ENCODE measurements at regions of chr11 and their contacts with region 1.

Region 1: DNA sequence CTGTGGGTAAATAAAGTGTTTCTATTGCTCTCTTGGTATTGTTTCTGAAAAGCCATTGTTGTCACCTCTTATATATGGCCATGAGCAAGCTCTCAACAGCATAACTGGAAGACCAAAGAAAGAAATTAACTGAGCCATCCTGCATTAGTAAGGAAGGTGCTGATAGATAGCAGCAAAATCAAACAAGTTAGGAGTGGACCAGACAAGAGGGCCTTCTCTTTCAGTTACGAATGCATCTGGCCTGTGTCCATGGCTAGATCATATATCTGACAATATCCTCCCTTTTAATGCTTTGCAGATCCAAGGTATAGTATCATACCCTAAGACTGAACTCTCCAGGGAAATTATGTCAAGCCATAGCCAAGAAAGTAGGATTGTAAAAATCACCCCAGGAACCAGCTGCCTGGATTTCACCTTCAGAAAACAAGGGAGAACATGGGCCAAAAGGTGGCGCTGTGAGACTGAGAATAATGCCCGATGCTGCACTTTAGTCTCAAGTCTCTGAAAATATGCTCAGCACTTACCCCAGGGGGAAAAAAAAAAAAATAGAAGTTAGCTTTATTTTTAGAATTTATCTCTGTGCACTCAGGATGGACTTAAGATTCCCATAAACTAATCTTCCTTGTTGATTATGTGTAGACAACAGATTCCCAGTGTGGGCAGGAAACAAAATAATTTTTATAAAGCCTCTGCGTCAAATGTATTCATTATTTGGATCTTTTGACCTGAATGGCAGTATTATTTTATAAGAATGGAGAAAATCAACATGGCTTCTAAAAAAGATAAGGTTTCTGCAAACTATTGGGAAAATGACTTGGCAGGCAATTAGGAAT is 415.1 kb downstream of the ETS1 start:
- DNase-seq: peak; percentile 75 to 81 (median 77)
- H3K4me3 ChIP-seq: no peak overlapping the region
- H3K4me3 Mint-ChIP-seq: no peak overlapping the region
- H3K27ac ChIP-seq: no peak overlapping the region
- H3K27ac Mint-ChIP-seq: peak overlapping the region in 1 of 7 donors; percentile 11
- H3K4me1 ChIP-seq: no peaks in the 10 kb centered on the region
- H3K4me1 Mint-ChIP-seq: peaks cover 0 to 4% (median under 1%) of the 10 kb centered on the region in 4 donors
- H3K27me3 ChIP-seq: no peaks in the 10 kb centered on the region
- H3K27me3 Mint-ChIP-seq: no peaks in the 10 kb centered on the region

Region 2: DNA sequence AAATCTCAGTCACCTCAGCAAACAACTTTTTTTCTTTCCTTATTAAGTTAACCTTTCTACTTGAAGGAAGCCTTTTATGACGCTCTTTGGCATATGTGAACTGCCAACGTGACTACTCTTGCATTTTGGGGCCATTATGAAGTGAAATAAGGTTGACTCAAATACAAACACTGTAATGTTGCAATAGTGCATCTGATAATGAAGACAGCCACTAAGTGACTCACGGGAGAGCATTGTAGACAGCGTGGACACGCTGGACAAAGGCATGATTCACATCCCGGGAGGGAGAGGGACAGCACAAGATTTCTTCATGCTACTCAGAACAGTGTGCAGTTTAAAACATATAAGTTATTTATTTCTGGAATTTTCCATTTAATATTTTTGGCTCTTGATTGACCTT is 145.7 kb before region 1 on chr11:
- CTCF ChIA-PET with region 1: interaction called, 19 read pairs
- POLR2A ChIA-PET with region 1: no interaction called
- intact Hi-C with region 1: loop called (anchors 1 kb)
- DNase-seq: no peak
- H3K4me3 ChIP-seq: no peak overlapping the region
- H3K4me3 Mint-ChIP-seq: no peak overlapping the region
- H3K27ac ChIP-seq: no peak overlapping the region
- H3K27ac Mint-ChIP-seq: no peak overlapping the region
- H3K4me1 ChIP-seq: no peaks in the 10 kb centered on the region
- H3K4me1 Mint-ChIP-seq: peaks cover 0 to 4% (median 1%) of the 10 kb centered on the region in 4 donors
- H3K27me3 ChIP-seq: no peaks in the 10 kb centered on the region
- H3K27me3 Mint-ChIP-seq: peaks cover 3 to 4% of the 10 kb centered on the region in 2 donors

Region 3: GRCh38 chr11:128283451-128283850 is 111.2 kb after region 1 on chr11:
- CTCF ChIA-PET with region 1: interaction called, 22 read pairs
- POLR2A ChIA-PET with region 1: no interaction called
- intact Hi-C with region 1: no loop called
- DNase-seq: no peak
- H3K4me3 ChIP-seq: no peak overlapping the region
- H3K4me3 Mint-ChIP-seq: no peak overlapping the region
- H3K27ac ChIP-seq: no peak overlapping the region
- H3K27ac Mint-ChIP-seq: no peak overlapping the region
- H3K4me1 ChIP-seq: peaks cover 36% of the 10 kb centered on the region
- H3K4me1 Mint-ChIP-seq: peaks cover 32 to 41% (median 33%) of the 10 kb centered on the region in 4 donors
- H3K27me3 ChIP-seq: no peaks in the 10 kb centered on the region
- H3K27me3 Mint-ChIP-seq: peaks cover 4% of the 10 kb centered on the region in 2 donors

Region 4: DNA sequence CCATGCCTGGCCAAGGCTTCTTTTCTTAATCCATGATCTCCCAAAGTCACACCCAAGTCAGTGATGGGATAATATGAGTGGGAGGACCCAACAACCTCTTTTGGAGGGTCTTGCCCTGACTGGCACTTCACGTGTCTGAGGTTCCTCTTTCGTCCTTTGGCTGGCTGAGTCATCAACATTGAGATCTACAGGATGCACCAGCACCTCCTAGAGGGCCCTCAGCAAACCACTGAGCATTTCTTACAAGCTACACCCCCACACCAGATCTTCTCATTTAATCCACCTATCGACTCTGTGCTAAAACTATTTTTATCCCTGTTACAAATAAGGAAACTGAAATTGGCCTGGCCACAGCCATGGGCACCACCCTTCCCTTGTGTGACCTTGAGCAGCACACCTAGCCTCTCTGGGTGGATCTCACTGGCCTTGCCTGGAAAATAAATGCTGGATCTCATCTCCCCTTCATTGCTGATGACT is 585.0 kb after region 1 on chr11:
- CTCF ChIA-PET with region 1: interaction called, 24 read pairs
- POLR2A ChIA-PET with region 1: no interaction called
- intact Hi-C with region 1: loop called (anchors 5 kb)
- DNase-seq: peak; percentile 64 to 85 (median 72)
- H3K4me3 ChIP-seq: no peak overlapping the region
- H3K4me3 Mint-ChIP-seq: peak overlapping the region in 6 of 8 donors; percentile 8 to 82 (median 54)
- H3K27ac ChIP-seq: peak overlapping the region; percentile 34
- H3K27ac Mint-ChIP-seq: peak overlapping the region; percentile 77 to 96 (median 94)
- H3K4me1 ChIP-seq: peaks cover 70% of the 10 kb centered on the region
- H3K4me1 Mint-ChIP-seq: peaks cover 59 to 87% (median 76%) of the 10 kb centered on the region in 4 donors
- H3K27me3 ChIP-seq: no peaks in the 10 kb centered on the region
- H3K27me3 Mint-ChIP-seq: no peaks in the 10 kb centered on the region

Region 5: DNA sequence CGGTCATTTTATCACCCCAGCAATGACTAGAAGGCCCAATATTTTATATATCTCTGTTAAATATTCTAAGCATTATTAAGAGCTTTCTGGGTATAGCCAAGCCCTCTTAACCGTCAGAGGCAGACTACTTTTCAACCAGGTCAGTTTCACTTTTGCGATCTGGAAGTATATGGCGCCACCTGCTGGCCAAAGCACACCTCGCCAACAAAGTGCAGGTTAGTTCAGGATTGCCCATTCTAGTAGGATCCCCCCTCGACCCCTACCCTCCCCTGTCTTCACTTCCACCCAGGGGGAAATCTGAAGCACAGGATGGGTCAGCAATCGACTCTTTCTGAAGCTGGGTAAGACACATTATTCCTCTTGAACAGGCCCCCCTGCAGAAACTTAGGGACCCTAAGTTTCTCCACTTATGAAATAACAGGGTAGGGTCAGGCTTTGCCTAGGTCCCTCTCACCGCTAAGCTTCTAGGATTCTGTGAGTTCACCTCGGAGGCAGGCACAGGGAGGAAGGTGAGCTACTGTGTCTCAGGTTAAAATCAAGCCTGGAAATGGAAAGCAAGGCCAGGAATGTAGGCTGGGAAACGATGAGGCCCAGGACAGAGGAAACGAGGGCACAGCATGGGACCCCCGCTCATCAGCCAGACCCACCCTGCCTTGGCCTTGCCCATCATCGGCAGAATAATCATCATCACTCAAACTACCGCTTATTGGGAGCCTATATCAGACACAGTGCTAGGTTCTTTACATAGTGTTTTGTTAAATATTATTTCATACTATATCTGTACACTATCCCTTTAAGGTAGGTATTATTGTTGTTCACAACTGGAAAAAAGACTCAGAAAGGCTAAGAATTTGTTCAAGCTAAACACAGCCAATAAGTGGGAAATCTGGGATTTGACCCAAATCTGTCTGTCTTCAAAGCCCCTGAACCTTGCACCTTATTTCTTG is 659.2 kb after region 1 on chr11:
- CTCF ChIA-PET with region 1: interaction called, 125 read pairs
- POLR2A ChIA-PET with region 1: interaction called, 4 read pairs
- intact Hi-C with region 1: loop called (anchors 1 kb)
- DNase-seq: peak; percentile 79 to 85 (median 83)
- H3K4me3 ChIP-seq: peak overlapping the region in 1 of 2 donors; percentile 12
- H3K4me3 Mint-ChIP-seq: peak overlapping the region; percentile 46 to 91 (median 82)
- H3K27ac ChIP-seq: peak overlapping the region; percentile 76
- H3K27ac Mint-ChIP-seq: peak overlapping the region; percentile 86 to 98 (median 97)
- H3K4me1 ChIP-seq: peaks cover 24% of the 10 kb centered on the region
- H3K4me1 Mint-ChIP-seq: peaks cover 21 to 49% (median 36%) of the 10 kb centered on the region in 4 donors
- H3K27me3 ChIP-seq: no peaks in the 10 kb centered on the region
- H3K27me3 Mint-ChIP-seq: no peaks in the 10 kb centered on the region

Region 6: DNA sequence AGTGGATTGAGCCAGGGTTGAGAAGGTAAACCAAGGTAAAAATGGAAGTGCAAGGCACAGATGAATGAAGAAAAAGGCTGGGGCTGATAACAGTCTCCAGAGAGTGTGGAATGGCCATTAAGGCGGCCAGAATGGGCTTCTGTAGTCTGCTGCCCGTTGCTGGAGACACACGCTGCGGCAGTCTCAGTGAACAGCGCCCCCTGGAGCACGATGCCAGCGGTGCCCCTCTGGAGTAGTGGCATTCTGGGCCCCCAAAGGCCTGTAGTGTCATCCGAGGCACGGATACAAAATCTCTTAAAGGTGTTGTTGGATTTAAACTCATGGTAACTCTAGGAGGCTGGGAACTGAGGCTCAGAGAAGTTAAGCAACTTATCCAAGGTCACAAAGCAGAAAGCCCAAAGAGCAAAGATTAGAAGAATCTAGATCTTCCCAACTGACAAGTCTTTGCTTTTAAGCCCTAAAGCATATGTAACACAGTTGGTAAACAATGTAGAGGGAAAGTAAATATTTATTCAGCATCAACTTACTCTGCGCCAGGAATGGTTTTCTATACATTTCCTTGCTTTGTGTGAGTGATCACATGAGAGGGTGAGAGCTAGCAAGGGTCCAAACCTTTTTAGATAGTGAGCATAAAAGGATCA is 676.7 kb after region 1 on chr11:
- CTCF ChIA-PET with region 1: interaction called, 14 read pairs
- POLR2A ChIA-PET with region 1: interaction called, 4 read pairs
- intact Hi-C with region 1: loop called (anchors 1 kb)
- DNase-seq: peak in 4 of 5 donors; percentile 46 to 62 (median 56)
- H3K4me3 ChIP-seq: no peak overlapping the region
- H3K4me3 Mint-ChIP-seq: peak overlapping the region in 1 of 8 donors; percentile 27
- H3K27ac ChIP-seq: no peak overlapping the region
- H3K27ac Mint-ChIP-seq: peak overlapping the region in 5 of 7 donors; percentile 3 to 78 (median 46)
- H3K4me1 ChIP-seq: peaks cover 35% of the 10 kb centered on the region
- H3K4me1 Mint-ChIP-seq: peaks cover 23 to 42% (median 37%) of the 10 kb centered on the region in 4 donors
- H3K27me3 ChIP-seq: no peaks in the 10 kb centered on the region
- H3K27me3 Mint-ChIP-seq: no peaks in the 10 kb centered on the region

Region 7: GRCh38 chr11:128956401-128957201 is 784.3 kb after region 1 on chr11:
- CTCF ChIA-PET with region 1: interaction called, 17 read pairs
- POLR2A ChIA-PET with region 1: no interaction called
- intact Hi-C with region 1: loop called (anchors 2 kb)
- DNase-seq: peak in 4 of 5 donors; percentile 34 to 41 (median 38)
- H3K4me3 ChIP-seq: no peak overlapping the region
- H3K4me3 Mint-ChIP-seq: no peak overlapping the region
- H3K27ac ChIP-seq: no peak overlapping the region
- H3K27ac Mint-ChIP-seq: no peak overlapping the region
- H3K4me1 ChIP-seq: no peaks in the 10 kb centered on the region
- H3K4me1 Mint-ChIP-seq: peaks cover 0 to 2% (median under 1%) of the 10 kb centered on the region in 4 donors
- H3K27me3 ChIP-seq: no peaks in the 10 kb centered on the region
- H3K27me3 Mint-ChIP-seq: peaks cover 6 to 14% of the 10 kb centered on the region in 2 donors